Ascending aorta (tissue), 2 donors: ENCODE measurements at regions of chr12 and their contacts with region 1.

Region 1: GRCh38 chr12:5428332-5429221 is 3.3 kb upstream of the NTF3 start:
- DNase-seq: no peak
- H3K4me3 ChIP-seq: no peak overlapping the region
- H3K27ac ChIP-seq: peak overlapping the region; percentile 88 to 92
- H3K4me1 ChIP-seq: peaks cover 0 to 11% of the 10 kb centered on the region in 2 donors
- H3K27me3 ChIP-seq: no peaks in the 10 kb centered on the region
- CTCF ChIP-seq: peak; percentile 60 to 74 (median 61)

Region 2: GRCh38 chr12:4857472-4858291 is 570.9 kb before region 1 on chr12:
- intact Hi-C with region 1: loop called (anchors 5 kb)
- DNase-seq: peak in 1 of 2 donors; percentile 83
- H3K4me3 ChIP-seq: peak overlapping the region; percentile 41 to 42
- H3K27ac ChIP-seq: no peak overlapping the region
- H3K4me1 ChIP-seq: peaks cover 3 to 10% of the 10 kb centered on the region in 2 donors
- H3K27me3 ChIP-seq: no peaks in the 10 kb centered on the region
- CTCF ChIP-seq: peak; percentile 56 to 88 (median 79)

Region 3: GRCh38 chr12:5034603-5035002 is 394.0 kb before region 1 on chr12:
- intact Hi-C with region 1: no loop called
- DNase-seq: no peak
- H3K4me3 ChIP-seq: no peak overlapping the region
- H3K27ac ChIP-seq: peak overlapping the region; percentile 72 to 81
- H3K4me1 ChIP-seq: peaks cover 10 to 18% of the 10 kb centered on the region in 2 donors
- H3K27me3 ChIP-seq: no peaks in the 10 kb centered on the region
- CTCF ChIP-seq: no peak

Region 4: GRCh38 chr12:5083955-5084849 is 344.4 kb before region 1 on chr12:
- intact Hi-C with region 1: loop called (anchors 5 kb)
- DNase-seq: no peak
- H3K4me3 ChIP-seq: no peak overlapping the region
- H3K27ac ChIP-seq: peak overlapping the region; percentile 63 to 69
- H3K4me1 ChIP-seq: peaks cover 12 to 48% of the 10 kb centered on the region in 2 donors
- H3K27me3 ChIP-seq: no peaks in the 10 kb centered on the region
- CTCF ChIP-seq: peak; percentile 54 to 74 (median 62)

Region 5: DNA sequence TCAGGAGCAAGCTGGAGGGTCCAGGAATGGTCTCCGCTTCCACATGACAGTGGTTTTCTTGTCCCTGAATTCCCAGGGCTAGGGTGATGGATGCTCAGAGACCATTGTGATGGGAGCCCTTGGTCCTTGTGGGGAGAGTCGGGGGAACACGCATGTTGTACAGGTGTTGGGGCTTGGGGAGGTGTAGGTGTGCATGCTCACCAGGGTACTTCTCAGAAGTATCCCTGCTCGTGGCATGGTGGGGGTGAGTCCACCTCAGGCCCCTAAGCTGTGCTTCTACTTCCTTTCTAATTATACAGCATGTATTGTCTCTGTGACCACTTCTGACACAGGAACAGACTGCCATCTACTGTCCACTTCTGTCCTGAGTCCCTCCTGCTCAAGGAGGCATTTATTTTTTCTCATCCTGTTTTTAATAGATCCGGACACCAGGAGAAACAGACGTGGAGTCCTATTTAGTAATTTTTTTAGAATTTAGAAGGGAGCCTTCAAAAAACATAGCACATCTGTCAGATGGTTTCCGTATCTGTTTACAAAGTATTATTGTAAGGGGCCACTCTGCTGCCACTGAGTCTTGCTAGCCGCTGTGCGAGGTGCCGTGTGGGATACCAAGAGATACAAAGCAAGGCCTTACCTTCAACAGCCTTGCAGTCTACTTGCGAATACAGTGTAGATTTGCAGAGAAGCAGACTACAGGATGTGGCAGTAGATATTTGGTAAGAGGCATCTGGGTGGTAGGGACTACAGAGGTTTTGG is 13.9 kb after region 1 on chr12:
- intact Hi-C with region 1: loop called (anchors 2 kb)
- DNase-seq: peak in 1 of 2 donors; percentile 59
- H3K4me3 ChIP-seq: no peak overlapping the region
- H3K27ac ChIP-seq: no peak overlapping the region
- H3K4me1 ChIP-seq: peaks cover 2 to 19% of the 10 kb centered on the region in 2 donors
- H3K27me3 ChIP-seq: no peaks in the 10 kb centered on the region
- CTCF ChIP-seq: peak; percentile 44 to 71 (median 50)

Region 6: DNA sequence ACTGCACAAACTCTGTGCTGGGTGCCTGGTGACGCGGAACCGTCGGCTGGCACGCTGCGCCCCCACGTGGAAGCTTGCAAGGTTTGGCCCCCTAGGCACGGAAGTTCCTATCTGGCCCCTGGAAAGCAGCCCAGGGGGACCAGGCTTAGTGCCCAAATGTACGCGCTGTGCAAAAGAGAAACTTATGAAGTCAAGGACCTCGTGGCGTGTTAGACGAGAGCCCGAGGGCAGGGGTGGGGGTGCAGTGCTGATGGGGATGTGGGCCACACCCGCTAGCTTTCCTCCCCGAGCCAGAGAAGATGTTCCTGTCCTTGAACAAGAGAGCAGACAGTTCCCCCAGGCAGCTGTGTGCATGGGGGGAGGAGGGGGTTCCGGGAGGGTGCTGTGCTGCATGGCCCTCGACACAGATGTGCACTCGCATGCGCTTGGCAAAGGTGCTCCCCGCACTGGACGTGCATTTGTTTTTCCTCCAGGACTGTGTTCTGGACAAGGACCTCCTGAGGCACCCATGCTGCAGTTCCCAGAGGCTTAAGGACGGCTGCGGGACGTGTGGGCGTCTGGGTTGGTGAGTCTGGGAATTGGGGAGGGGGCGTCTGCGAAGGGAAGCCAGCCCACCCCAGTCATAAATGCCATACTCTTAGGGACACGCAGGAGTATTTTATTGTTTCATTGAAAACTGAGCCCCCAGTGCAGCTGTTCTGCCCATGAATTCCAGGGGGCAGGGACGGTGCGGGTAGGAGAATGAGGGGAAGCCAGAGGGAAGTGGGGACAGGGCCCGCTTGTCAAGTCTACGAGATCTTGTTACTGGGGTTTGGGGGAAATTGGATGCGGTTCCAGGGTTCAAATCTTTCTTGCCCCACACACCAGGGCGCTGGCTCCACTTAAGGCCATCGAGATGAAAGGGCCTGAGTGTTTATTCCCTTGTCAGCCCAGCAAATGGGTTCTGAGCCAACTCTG is 83.3 kb after region 1 on chr12:
- intact Hi-C with region 1: loop called (anchors 1 kb)
- DNase-seq: peak in 1 of 2 donors; percentile 72
- H3K4me3 ChIP-seq: peak overlapping the region in 1 of 2 donors; percentile 28
- H3K27ac ChIP-seq: no peak overlapping the region
- H3K4me1 ChIP-seq: no peaks in the 10 kb centered on the region
- H3K27me3 ChIP-seq: no peaks in the 10 kb centered on the region
- CTCF ChIP-seq: peak; percentile 50 to 88 (median 71)

Region 7: GRCh38 chr12:5716231-5716630 is 287.7 kb after region 1 on chr12:
- intact Hi-C with region 1: loop called (anchors 10 kb)
- DNase-seq: peak; percentile 14 to 74
- H3K4me3 ChIP-seq: no peak overlapping the region
- H3K27ac ChIP-seq: peak overlapping the region; percentile 40 to 57
- H3K4me1 ChIP-seq: peaks cover 0 to 14% of the 10 kb centered on the region in 2 donors
- H3K27me3 ChIP-seq: no peaks in the 10 kb centered on the region
- CTCF ChIP-seq: no peak